Tibial artery (tissue), 4 donors: ENCODE measurements at regions of chr2 and their contacts with region 1.

Region 1: DNA sequence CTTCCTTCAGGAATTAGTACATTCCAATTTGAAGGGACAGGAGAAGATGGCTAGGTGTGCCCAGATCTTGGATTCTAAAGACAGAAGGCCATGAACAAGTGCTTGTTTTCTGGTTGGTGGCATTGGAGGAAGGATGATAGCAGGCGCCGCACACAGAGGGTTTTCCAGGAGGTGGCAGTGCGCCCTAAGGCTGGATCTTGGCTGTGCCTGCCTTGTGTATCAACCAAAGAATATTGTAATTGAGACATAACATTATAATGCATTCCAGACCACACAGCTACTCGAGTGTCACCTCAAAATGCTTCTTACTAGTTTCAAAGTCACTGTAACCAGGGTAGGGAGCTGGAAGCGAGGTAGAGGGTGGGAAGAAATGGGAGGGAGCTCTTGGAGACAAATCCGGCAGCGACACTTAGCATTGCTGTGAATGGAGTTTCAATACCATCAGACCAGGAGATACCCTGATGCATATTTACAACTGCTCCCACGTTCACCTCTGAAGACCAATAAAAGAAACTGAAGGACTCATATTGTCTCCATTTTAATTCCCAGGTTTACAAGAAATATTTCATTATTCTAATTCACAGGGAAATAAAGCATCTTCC is 42.5 kb downstream of the CPO start:
- DNase-seq: peak; percentile 73 to 84
- H3K4me3 ChIP-seq: peak overlapping the region in 1 of 2 donors; percentile 11
- H3K27ac ChIP-seq: no peak overlapping the region
- H3K4me1 ChIP-seq: peaks cover 0 to 10% (median 3%) of the 10 kb centered on the region in 4 donors
- H3K27me3 ChIP-seq: no peaks in the 10 kb centered on the region
- CTCF ChIP-seq: peak; percentile 89 to 97

Region 2: DNA sequence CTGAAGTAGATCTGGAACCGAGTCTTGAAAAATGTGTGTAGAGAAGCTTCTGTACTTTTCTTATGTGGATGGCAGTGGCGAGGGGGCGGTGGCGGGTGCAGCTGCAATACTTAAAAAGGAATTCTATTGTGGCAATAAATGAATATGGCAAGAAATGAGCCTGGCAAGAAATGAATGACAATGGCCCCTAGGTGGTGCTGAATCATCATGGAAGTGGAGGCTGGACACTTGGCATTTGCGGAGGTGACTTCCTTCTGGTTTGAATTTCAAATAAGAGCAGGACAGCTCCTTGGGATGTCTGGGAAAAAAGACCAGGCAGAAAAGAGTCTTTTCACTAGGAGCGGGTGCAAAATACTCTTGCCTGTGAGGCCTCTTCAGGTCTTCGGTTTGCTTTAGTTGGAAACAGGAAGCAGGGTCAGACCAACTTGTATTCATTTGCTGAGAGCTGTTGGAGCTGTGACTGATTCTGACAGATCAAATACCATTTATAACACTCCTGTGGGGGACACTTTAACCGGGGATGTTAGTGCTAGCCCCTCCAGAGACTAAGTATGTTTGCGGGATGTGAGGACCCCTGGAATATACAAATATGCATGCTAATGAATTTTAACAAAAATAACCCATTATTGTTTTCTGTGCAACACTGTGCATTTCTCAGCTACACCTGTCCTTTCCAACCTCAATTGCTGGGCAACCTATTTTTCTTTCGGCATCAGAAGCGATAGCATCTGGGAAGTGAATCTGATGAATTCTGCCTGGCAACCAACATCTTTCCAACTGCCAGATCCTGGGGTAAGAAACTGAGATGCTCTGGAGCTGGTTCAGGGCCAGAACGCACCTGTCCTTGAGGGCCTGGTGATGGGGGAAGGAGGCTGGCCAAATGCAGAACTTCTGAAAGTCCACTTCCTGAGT is 181.1 kb before region 1 on chr2:
- intact Hi-C with region 1: loop called (anchors 10 kb)
- DNase-seq: peak; percentile 58 to 70
- H3K4me3 ChIP-seq: no peak overlapping the region
- H3K27ac ChIP-seq: no peak overlapping the region
- H3K4me1 ChIP-seq: peaks cover 0 to 9% (median 5%) of the 10 kb centered on the region in 4 donors
- H3K27me3 ChIP-seq: no peaks in the 10 kb centered on the region
- CTCF ChIP-seq: peak; percentile 64 to 69

Region 3: DNA sequence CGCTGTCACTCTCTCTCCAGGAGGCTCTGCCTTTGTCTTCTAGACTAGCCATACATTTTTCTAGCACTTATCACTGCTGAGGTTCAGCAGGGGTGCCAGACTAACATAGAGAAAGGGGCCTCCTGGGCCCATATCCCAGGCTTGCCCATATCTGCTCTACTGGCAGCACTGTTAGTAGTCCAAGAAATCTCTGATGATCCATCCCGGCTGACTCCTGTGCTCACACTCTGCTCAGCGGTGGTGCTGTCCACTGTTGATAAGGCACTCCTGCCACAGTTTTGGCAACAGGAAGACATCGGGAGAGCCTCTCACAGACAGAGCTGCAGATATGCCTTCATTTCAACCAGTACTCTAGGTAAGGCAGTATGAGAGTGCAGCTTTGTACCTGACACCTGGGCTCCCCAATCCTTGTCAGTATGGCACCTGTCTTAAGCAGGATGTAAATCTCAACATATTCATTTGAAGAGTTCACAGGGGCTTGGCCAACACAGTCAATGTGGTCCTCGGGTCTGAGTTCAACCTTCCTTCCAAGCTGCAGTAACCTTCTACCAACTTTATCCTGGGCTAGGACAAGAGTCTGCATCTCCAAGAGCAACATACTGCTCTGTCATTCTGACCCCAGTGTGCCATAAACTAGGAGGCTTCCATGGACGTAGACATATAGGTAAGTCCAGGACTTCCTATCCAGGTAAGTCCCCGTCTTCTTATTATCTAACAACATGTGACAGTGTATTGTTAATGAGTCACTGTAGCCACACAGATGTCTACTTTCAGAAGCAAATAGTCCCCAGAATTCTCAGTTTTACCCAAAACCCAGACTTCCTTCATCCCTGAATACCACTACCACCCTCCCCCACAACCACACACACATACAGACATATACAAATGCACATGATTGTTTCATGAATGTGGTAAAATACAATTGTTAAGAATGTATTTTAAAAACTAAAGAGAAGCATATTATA is 167.7 kb after region 1 on chr2:
- intact Hi-C with region 1: no loop called
- DNase-seq: no peak
- H3K4me3 ChIP-seq: no peak overlapping the region
- H3K27ac ChIP-seq: peak overlapping the region; percentile 70 to 100
- H3K4me1 ChIP-seq: peaks cover 8 to 100% (median 85%) of the 10 kb centered on the region in 4 donors
- H3K27me3 ChIP-seq: no peaks in the 10 kb centered on the region
- CTCF ChIP-seq: no peak